ENCODE measurements at regions of chr2 and their contacts with region 1.

Region 1: GRCh38 chr2:48530033-48530804 is at the start of gene STON1:
- DNase-seq: peak; percentile 65 to 87 (median 86)
- ATAC-seq: peak; percentile 79 to 81
- H3K4me3 ChIP-seq: peak within 1 kb of the TSS; percentile 86
- H3K27ac ChIP-seq: peak within 1 kb of the TSS; percentile 74
- H3K4me1 ChIP-seq: peaks cover 14% of the 10 kb centered on the region
- H3K27me3 ChIP-seq: no peaks in the 10 kb centered on the region
- total RNA-seq, gene STON1: 8.8 to 18.0 (median 13.1) TPM

Region 2: DNA sequence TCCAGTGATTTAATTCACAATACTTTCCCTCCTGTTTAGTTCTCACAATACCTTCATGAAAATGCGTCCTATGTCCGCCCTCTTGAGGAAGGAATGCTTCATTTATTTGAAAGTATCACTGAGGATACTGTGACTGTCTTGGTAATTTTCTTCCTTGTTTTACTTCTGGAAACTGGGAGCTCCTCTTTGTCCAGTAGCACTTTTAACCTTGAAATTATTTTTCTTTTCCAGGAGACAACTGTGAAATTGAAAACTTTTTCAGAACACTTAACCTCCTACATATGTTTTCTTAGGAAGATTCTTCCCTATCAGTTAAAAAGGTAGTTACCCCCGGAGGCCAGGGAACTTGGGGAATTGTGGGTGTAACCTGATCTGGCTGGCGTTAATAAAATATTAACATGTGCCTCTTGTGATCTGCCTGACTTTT is 59.2 kb before region 1 on chr2:
- intact Hi-C with region 1: loop called in 1 of 4 experiments (anchors 10 kb)
- DNase-seq: no peak
- ATAC-seq: peak; percentile 81 to 84
- H3K4me3 ChIP-seq: no peak overlapping the region
- H3K27ac ChIP-seq: no peak overlapping the region
- H3K4me1 ChIP-seq: no peaks in the 10 kb centered on the region
- H3K27me3 ChIP-seq: no peaks in the 10 kb centered on the region